Activated B cell treated with CpG ODN at 0.5 μM for 24 hours (primary cell): ENCODE measurements at regions of chr3 and their contacts with region 1.

Region 1: DNA sequence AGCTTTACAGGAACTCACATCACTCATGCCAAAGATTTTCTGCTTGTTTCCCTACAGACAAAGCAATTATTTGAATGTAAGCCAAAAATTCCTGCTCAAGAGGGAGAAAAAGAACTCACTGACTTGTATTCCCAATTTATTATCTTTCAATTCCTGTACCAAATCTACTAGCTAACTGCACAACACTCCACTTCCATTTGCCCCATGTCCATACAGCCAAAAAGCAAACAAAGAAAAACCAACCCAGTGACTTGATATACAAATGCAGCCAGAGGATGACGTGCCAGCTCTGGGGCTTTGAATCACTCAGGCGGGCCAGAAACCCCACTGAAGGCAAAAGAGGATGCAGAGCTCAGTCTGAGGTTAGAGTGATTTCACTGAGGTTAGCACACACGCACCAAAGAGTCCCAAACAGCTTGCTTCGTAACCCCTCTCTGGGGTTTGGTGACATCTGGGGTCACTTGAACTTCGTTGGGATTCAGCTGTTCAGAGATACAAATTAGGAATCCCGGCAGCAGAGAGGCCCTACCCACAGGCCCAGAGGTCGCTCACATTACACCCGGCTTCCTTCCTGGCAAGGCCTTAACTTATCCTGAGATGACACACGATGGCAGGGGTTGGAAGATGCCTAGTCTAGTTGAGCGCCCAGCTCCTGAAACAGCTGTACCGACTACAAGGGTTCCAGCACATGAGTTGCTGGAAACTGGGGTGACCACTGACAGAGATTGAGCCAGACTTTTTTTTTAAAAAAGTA is 1.6 kb downstream of the RFTN1 start:
- DNase-seq: peak; percentile 64
- ATAC-seq: peak; percentile 66
- H3K4me3 Mint-ChIP-seq: peak overlapping the region; percentile 97
- H3K27ac Mint-ChIP-seq: peak overlapping the region; percentile 82
- H3K4me1 Mint-ChIP-seq: peaks cover 86% of the 10 kb centered on the region
- H3K27me3 Mint-ChIP-seq: no peaks in the 10 kb centered on the region
- CTCF ChIP-seq: no peak

Region 2: DNA sequence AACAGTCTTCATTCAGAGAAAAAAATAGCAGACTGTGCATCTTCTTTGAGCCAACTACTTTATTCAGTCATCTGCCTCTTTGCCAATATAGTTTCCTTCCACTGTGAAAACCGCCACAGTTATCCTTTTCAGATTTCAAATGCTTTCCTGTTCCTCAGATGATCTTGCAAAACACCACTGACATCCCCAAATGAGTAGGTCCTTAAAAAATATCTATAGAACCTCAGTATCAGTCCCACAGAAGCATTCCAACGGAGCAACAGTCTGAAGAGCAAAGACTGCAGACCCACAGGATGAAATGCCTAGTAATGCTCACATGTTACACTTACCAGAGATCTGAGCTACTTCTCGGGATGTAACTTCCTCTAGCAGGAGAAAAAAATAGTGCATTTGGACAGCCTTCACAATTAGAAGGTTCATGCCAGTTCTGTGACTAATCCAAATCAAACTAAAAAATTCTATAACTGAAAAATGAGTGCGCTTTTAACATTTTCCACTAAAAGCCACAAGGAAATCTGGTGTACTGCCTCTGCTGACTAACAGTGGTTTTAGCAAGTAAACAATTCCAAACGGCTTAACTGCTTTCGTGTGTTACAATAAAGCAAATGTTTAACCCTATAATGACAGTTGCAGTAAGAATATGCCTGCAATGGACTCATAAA is 714.1 kb before region 1 on chr3 and contains the start of gene ANKRD28:
- CTCF ChIA-PET with region 1: no interaction called
- POLR2A ChIA-PET with region 1: no interaction called
- intact Hi-C with region 1: loop called (anchors 5 kb)
- DNase-seq: no peak
- ATAC-seq: peak; percentile 20
- H3K4me3 Mint-ChIP-seq: peak within 1 kb of the TSS; percentile 68
- H3K27ac Mint-ChIP-seq: peak within 1 kb of the TSS; percentile 82
- H3K4me1 Mint-ChIP-seq: peaks cover 66% of the 10 kb centered on the region
- H3K27me3 Mint-ChIP-seq: no peaks in the 10 kb centered on the region
- CTCF ChIP-seq: no peak
- total RNA-seq, gene ANKRD28: 27.5 and 29.9 TPM in 2 replicates

Region 3: DNA sequence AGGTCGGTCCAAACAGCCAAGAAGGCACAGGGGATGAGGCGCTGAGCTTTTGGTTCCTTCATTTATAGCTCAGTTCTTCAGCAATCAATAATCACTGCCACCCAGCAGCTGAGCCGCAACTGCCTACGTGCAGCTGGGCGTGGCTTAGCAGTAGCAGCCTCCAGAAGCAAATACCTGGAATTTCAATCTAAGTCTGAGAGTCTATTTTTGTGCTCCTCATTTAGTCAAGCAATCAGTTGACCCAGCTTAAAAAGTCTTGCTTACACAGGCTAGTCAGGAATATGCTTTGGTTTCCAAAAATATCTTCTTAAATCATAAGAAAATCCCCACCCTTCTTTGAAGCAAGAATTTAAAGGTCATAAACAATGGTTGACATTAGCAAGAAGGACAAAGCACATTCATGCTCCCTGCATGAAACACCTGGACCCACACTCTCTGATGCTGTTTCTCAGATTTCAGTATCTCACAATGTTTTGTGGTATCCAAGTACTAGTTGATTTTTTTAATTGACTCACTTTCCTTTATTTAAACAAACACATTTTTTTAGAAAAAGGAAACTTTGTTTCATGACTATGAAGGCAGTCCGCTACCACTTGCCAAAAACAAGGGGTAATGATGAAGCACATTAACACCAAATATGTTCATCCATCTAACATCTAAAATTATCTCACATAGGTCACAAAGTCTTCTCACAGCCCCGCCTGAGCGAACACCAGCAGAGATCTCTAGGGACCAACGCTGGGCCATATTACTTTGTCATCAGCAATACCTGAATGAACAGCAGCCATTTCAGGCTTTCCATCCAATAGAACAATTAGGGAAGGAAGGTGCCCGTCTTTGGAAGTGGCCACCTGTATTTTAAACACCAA is 140.8 kb before region 1 on chr3:
- CTCF ChIA-PET with region 1: interaction called, 4 read pairs
- POLR2A ChIA-PET with region 1: interaction called, 202 read pairs
- intact Hi-C with region 1: loop called (anchors 1 kb)
- DNase-seq: peak; percentile 32
- ATAC-seq: peak; percentile 59
- H3K4me3 Mint-ChIP-seq: peak overlapping the region; percentile 75
- H3K27ac Mint-ChIP-seq: peak overlapping the region; percentile 93
- H3K4me1 Mint-ChIP-seq: peaks cover 95% of the 10 kb centered on the region
- H3K27me3 Mint-ChIP-seq: no peaks in the 10 kb centered on the region
- CTCF ChIP-seq: no peak

Region 4: GRCh38 chr3:16433701-16434151 is 78.1 kb before region 1 on chr3:
- CTCF ChIA-PET with region 1: interaction called, 10 read pairs
- POLR2A ChIA-PET with region 1: interaction called, 144 read pairs
- intact Hi-C with region 1: loop called (anchors 1 kb)
- DNase-seq: peak; percentile 58
- ATAC-seq: peak; percentile 63
- H3K4me3 Mint-ChIP-seq: peak overlapping the region; percentile 68
- H3K27ac Mint-ChIP-seq: peak overlapping the region; percentile 74
- H3K4me1 Mint-ChIP-seq: peaks cover 63% of the 10 kb centered on the region
- H3K27me3 Mint-ChIP-seq: no peaks in the 10 kb centered on the region
- CTCF ChIP-seq: no peak

Region 5: DNA sequence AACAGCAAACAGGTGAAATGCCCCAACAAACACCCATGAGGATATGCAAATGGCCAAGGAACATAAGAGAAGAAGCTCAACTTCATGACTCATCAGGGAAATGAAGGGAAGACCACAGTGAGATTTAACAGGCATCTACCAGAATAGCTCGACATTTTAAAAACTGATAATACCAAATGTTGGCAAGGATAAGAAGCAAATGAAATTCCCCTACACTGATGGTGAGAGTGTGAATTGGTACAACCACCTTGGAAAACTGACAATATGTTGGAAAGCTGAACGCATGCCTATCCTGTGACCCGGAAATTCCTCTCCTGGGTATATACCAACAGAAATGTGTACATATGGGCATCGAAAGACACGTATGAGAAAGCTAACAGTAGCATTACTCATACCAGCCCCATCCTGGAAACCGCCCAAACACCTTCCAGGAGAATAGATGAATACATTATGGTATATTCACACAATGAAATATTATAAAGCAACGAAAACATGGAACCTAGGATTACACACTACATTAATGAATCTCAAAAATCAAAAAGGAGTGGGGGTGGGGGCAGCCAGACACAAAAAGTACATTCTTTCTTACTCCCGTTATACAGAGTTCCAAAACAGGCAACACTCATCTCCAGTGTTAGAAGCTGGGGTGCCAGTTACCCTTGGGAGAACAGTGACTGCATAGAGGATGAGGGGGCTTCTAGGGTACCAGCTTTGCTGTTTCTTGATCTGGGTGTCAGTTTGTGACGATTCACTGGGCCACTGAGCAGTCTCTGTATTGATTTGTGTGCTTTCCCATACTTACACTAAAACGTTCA is 15.2 kb before region 1 on chr3:
- CTCF ChIA-PET with region 1: interaction called, 3 read pairs
- POLR2A ChIA-PET with region 1: interaction called, 135 read pairs
- intact Hi-C with region 1: loop called (anchors 1 kb)
- DNase-seq: no peak
- ATAC-seq: peak; percentile 79
- H3K4me3 Mint-ChIP-seq: peak overlapping the region; percentile 59
- H3K27ac Mint-ChIP-seq: peak overlapping the region; percentile 38
- H3K4me1 Mint-ChIP-seq: peaks cover 66% of the 10 kb centered on the region
- H3K27me3 Mint-ChIP-seq: no peaks in the 10 kb centered on the region
- CTCF ChIP-seq: no peak

Region 6: DNA sequence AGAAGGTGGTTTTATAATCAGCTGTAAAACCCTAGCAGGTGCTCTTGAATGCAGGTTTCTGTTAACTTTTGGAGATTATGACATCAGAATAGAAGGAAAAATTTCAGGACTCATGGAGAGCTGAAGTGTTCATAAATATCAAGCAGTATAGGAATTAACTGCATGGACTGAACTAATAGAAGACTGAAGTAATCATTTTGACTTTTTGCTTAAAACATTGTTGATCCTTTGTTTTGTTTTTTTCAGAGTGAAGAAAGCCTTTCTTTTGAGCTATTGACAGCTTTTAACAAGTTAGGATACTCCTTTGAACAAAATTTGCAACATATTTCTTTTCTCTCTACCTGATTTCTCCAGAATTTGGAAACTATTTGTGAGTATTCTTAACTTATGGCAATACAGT is 163.9 kb after region 1 on chr3:
- CTCF ChIA-PET with region 1: no interaction called
- POLR2A ChIA-PET with region 1: no interaction called
- intact Hi-C with region 1: no loop called
- DNase-seq: no peak
- ATAC-seq: no peak
- H3K4me3 Mint-ChIP-seq: no peak overlapping the region
- H3K27ac Mint-ChIP-seq: no peak overlapping the region
- H3K4me1 Mint-ChIP-seq: no peaks in the 10 kb centered on the region
- H3K27me3 Mint-ChIP-seq: no peaks in the 10 kb centered on the region
- CTCF ChIP-seq: no peak

Region 7: DNA sequence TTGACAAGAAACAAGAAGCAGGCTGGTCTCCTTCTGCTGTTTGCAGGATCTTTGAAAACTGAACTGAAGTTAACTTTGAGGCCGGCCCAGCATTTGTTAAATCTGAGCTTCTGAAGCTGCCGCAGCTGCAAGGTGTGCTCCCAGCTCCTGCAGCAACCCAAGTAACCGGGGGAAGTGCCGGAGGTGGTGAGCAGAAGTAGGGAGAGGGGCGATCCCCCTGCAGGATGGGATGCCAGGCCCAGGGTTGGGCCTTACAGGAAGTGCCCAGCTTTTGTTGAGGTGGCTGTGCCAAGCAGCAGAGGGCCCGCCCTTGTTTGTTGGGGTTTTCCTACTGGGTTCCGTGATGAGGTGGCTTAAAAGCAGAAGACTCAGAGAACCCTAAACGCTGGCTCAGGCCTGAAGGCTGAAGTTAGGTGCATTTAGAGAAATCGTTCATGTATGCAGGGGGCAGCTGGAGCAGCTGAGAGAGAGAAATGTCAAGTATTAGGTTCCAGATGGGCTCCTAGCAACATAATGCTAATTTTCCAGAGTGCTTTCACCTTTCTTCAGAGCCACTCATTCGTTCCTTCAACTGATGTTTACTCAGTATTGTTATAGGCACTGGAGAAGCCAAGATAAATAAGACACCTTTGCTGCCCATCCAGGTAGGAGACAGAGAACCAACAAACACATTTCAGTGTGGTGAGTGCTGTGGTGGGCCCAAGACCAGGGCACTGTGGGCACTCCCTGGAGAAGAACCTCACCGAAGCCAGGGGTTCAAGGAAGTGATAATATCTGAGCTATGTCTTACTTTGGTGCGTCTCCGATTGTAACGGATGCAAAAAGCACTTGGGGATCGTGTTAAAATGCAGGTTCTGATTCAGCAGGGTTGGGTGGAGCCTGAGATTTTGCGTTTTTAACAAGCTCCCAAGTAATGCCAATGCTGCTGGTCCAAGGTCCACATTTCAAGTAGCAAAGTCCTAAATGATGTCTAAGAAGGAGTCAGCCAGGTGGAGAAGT is 330.7 kb after region 1 on chr3:
- CTCF ChIA-PET with region 1: no interaction called
- POLR2A ChIA-PET with region 1: interaction called, 3 read pairs
- intact Hi-C with region 1: loop called (anchors 5 kb)
- DNase-seq: peak; percentile 66
- ATAC-seq: peak; percentile 92
- H3K4me3 Mint-ChIP-seq: peak overlapping the region; percentile 75
- H3K27ac Mint-ChIP-seq: peak overlapping the region; percentile 98
- H3K4me1 Mint-ChIP-seq: peaks cover 67% of the 10 kb centered on the region
- H3K27me3 Mint-ChIP-seq: no peaks in the 10 kb centered on the region
- CTCF ChIP-seq: no peak

Region 8: GRCh38 chr3:16961621-16962205 is 449.9 kb after region 1 on chr3:
- CTCF ChIA-PET with region 1: no interaction called
- POLR2A ChIA-PET with region 1: no interaction called
- intact Hi-C with region 1: no loop called
- DNase-seq: no peak
- ATAC-seq: no peak
- H3K4me3 Mint-ChIP-seq: no peak overlapping the region
- H3K27ac Mint-ChIP-seq: no peak overlapping the region
- H3K4me1 Mint-ChIP-seq: peaks cover 41% of the 10 kb centered on the region
- H3K27me3 Mint-ChIP-seq: no peaks in the 10 kb centered on the region
- CTCF ChIP-seq: no peak

Region 9: GRCh38 chr3:17742108-17742879 is 1230.4 kb after region 1 on chr3 and contains the start of gene TBC1D5:
- CTCF ChIA-PET with region 1: no interaction called
- POLR2A ChIA-PET with region 1: no interaction called
- intact Hi-C with region 1: loop called (anchors 5 kb)
- DNase-seq: peak; percentile 91
- ATAC-seq: peak; percentile 83
- H3K4me3 Mint-ChIP-seq: peak within 1 kb of the TSS; percentile 96
- H3K27ac Mint-ChIP-seq: peak within 1 kb of the TSS; percentile 97
- H3K4me1 Mint-ChIP-seq: peaks cover 57% of the 10 kb centered on the region
- H3K27me3 Mint-ChIP-seq: no peaks in the 10 kb centered on the region
- CTCF ChIP-seq: no peak
- total RNA-seq, gene TBC1D5: 102 and 106 TPM in 2 replicates